ENCODE measurements at regions of chr1 and their contacts with region 1.

Region 1: DNA sequence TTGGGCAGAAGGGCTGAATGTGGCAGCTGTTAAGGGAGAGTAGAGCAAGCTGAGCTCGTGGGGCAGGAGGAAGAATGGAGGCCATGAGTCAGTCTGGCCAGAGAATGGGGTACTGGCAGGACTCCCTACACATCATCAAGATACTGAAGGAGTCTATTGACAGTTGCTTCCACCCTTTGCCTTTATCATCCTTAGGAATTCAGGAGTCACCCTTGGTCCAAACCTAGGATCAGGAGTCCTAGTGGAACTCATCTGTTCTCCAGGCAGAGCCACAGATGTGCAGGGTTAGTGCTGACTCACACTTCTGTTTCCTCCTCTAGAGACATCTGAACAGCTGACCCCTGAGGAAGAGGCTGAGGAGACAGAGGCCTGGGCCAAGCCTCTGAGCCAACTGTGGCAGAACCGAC is 18.7 kb upstream of the ST3GAL3 start:
- DNase-seq: no peak
- H3K4me3 Mint-ChIP-seq: no peak overlapping the region
- H3K27ac Mint-ChIP-seq: peak overlapping the region; percentile 38
- H3K4me1 Mint-ChIP-seq: peaks cover 3% of the 10 kb centered on the region
- H3K27me3 Mint-ChIP-seq: no peaks in the 10 kb centered on the region

Region 2: DNA sequence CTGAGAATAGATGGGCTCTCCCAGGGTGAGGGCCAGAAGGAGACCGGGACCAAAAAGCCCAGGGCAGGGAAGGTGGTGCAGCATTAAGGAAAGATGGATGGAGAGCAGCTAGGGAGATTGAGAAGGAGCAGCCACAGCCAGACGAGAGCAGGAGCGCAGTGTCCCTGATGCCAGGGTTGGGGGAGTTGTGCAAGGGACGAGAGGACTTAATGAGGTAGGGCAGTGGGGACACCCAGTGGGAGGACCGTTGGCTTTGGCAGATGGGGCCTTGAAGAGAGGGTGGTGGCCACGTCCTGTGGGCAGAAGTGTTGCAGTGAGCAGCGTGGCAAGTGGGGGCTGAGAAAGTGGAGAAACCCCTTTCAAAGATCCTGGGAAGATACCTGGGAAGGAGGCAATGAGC is 76.6 kb before region 1 on chr1:
- CTCF ChIA-PET with region 1: no interaction called
- POLR2A ChIA-PET with region 1: no interaction called
- DNase-seq: no peak
- H3K4me3 Mint-ChIP-seq: no peak overlapping the region
- H3K27ac Mint-ChIP-seq: no peak overlapping the region
- H3K4me1 Mint-ChIP-seq: no peaks in the 10 kb centered on the region
- H3K27me3 Mint-ChIP-seq: no peaks in the 10 kb centered on the region

Region 3: DNA sequence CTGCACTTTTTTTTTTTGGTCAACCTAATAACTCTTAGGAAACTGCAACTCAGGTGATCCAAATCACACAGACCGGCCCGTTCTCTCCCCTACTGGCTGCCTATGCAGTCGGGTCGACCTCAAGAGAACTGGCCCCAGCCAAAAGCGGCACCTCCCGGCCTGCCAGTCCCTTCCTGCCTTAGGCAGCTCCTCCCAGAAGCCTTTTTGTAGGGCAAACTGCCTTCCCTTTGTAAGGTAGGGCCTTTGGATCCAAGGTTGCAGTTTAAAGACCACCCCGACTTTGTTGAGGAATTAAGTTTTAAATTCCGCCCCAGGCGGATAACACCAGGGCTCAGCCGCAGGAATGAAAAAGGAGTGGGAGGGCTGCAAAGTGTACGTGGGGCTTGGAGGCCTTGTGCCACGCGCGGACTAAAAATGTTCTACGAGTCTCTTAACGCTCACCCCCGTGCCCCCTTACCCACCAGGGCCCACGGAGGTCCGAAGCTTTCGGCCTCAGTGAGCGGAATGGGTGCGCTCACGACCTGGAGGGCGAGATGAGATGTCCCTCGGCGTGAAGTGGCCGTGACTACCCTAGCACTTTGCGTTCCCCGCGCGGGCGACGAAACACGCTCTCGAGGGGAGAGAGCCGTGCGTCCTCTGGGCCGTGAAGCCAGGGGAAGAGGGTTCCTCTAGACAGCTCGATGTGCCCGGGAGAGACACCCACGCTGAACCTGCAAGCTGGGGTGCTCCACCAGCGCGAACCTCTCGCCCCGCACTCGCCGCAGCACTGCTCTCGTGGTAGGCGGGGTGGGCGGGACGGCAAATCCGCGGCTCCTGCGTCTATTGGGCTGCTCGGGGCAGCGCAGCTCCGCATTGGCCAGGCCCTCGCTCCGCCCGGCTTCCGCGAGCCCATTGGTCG is 18.2 kb after region 1 on chr1:
- CTCF ChIA-PET with region 1: no interaction called
- POLR2A ChIA-PET with region 1: interaction called, 11 read pairs
- DNase-seq: peak; percentile 94
- H3K4me3 Mint-ChIP-seq: peak overlapping the region; percentile 91
- H3K27ac Mint-ChIP-seq: peak overlapping the region; percentile 61
- H3K4me1 Mint-ChIP-seq: peaks cover 45% of the 10 kb centered on the region
- H3K27me3 Mint-ChIP-seq: no peaks in the 10 kb centered on the region

Region 4: DNA sequence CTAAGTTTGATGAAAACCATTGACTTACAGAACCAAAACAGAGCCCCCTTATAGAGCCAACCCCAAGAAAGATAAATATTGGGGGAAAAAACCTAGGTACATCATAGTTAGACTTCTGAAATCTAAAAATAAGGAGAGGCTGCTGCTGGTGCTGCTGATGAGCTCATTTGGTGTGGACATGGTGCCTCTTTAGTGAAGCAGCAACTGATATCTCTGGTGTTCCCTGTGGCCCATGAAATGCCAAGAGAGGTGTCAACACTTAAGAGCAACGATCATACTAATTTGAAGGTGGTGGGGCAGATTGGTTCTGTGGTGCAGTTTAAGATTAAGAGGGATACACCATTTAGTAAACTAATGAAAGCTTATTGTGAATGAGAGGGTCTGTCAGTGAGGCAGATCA is 54.6 kb after region 1 on chr1:
- CTCF ChIA-PET with region 1: no interaction called
- POLR2A ChIA-PET with region 1: no interaction called
- DNase-seq: no peak
- H3K4me3 Mint-ChIP-seq: no peak overlapping the region
- H3K27ac Mint-ChIP-seq: no peak overlapping the region
- H3K4me1 Mint-ChIP-seq: no peaks in the 10 kb centered on the region
- H3K27me3 Mint-ChIP-seq: no peaks in the 10 kb centered on the region

Measured in activated CD4-positive, alpha-beta memory T cell treated with anti-CD3 and anti-CD28 coated beads, Interleukin-2, amount 10 ng/mL, durations not matched to agents 7 days and 5 days (primary cell).